Heart right ventricle (tissue), 16 donors: ENCODE measurements at regions of chr4 and their contacts with region 1.

Region 1: GRCh38 chr4:168514249-168514852 is 17.5 kb downstream of the PALLD start:
- DNase-seq: no peak
- ATAC-seq: no peak
- H3K4me3 ChIP-seq: peak overlapping the region in 1 of 10 donors; percentile 3
- H3K27ac ChIP-seq: peak overlapping the region in 3 of 10 donors; percentile 13 to 75 (median 67)
- H3K4me1 ChIP-seq: peaks cover 0 to 67% (median 16%) of the 10 kb centered on the region in 9 donors
- H3K27me3 ChIP-seq: no peaks in the 10 kb centered on the region
- CTCF ChIP-seq: peak; percentile 8 to 66 (median 52)

Region 2: GRCh38 chr4:168264903-168265302 is 249.4 kb before region 1 on chr4:
- intact Hi-C with region 1: loop called in 1 of 10 experiments (anchors 10 kb)
- DNase-seq: peak in 1 of 2 donors; percentile 70
- ATAC-seq: peak; percentile 75 to 95 (median 94)
- H3K4me3 ChIP-seq: no peak overlapping the region
- H3K27ac ChIP-seq: peak overlapping the region in 9 of 10 donors; percentile 47 to 82 (median 74)
- H3K4me1 ChIP-seq: peaks cover 0 to 13% (median 3%) of the 10 kb centered on the region in 9 donors
- H3K27me3 ChIP-seq: no peaks in the 10 kb centered on the region
- CTCF ChIP-seq: no peak

Region 3: GRCh38 chr4:168694648-168695047 is 180.3 kb after region 1 on chr4:
- intact Hi-C with region 1: loop called in 1 of 10 experiments (anchors 10 kb)
- DNase-seq: no peak
- ATAC-seq: peak in 6 of 8 donors; percentile 48 to 65 (median 64)
- H3K4me3 ChIP-seq: no peak overlapping the region
- H3K27ac ChIP-seq: peak overlapping the region in 6 of 10 donors; percentile 3 to 75 (median 56)
- H3K4me1 ChIP-seq: peaks cover 0 to 28% (median 6%) of the 10 kb centered on the region in 9 donors
- H3K27me3 ChIP-seq: no peaks in the 10 kb centered on the region
- CTCF ChIP-seq: no peak

Region 4: DNA sequence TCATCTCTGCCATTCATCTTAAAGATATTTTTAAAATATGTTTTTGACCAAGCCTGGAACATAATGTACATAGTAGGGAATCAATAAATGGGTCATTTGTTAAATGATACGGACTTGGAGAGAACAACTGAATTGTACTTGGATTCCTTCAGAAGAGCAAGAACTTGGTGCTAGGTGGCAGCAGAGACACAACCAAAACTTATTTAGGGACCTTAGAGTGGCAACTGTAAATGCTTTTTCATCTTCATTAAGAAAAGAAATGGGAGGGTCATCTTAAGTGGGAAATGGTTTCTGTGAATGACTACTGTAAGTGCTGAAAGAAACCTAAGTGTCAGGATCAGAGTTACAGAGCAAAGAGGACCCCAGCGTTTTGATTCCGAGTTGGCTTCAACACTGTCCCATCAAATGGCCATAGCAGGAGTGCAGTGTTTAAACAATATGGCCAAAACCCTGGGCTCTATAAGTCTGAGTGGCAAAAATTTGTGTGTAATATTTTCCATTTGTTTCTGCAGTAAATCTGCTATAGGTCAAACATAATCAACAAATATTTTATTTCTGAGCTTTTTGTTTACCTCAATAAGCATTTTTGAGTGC is 196.1 kb after region 1 on chr4:
- intact Hi-C with region 1: loop called in 2 of 10 experiments (anchors 10 kb)
- DNase-seq: peak in 1 of 2 donors; percentile 36
- ATAC-seq: peak in 7 of 8 donors; percentile 49 to 78 (median 65)
- H3K4me3 ChIP-seq: no peak overlapping the region
- H3K27ac ChIP-seq: peak overlapping the region in 6 of 10 donors; percentile 44 to 77 (median 62)
- H3K4me1 ChIP-seq: peaks cover 8 to 30% (median 22%) of the 10 kb centered on the region in 9 donors
- H3K27me3 ChIP-seq: no peaks in the 10 kb centered on the region
- CTCF ChIP-seq: peak; percentile 30 to 76 (median 61)

Region 5: GRCh38 chr4:168917138-168917779 is 402.9 kb after region 1 on chr4:
- intact Hi-C with region 1: loop called in 6 of 10 experiments (anchors 5 to 10 kb)
- DNase-seq: no peak
- ATAC-seq: peak in 1 of 8 donors; percentile 28
- H3K4me3 ChIP-seq: no peak overlapping the region
- H3K27ac ChIP-seq: peak overlapping the region in 1 of 10 donors; percentile 20
- H3K4me1 ChIP-seq: peaks cover 0 to 28% (median 7%) of the 10 kb centered on the region in 9 donors
- H3K27me3 ChIP-seq: no peaks in the 10 kb centered on the region
- CTCF ChIP-seq: peak; percentile 16 to 75 (median 67)